ENCODE measurements at regions of chr19 and their contacts with region 1.

Region 1: DNA sequence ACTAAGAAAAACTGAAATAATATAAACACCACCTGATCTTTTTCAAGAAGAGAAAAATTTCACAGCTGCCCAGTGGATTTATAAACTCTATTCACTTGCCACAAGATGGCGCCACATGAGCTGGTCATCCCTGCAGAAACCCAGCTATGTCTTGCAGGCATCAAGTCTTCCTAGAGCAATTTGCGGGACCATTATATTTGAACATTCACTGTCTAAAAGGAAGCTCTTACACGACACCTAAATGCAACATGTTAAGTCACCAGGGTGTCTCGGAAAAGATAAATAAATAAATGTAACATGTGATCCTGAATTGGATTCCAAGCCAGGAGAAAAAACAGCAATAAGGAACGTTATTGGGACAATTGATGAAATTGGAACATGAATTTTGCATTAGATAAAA is 20.3 kb upstream of the AKT2 start:
- DNase-seq: peak; percentile 78
- ATAC-seq: peak; percentile 64
- H3K4me3 ChIP-seq: no peak overlapping the region
- H3K27ac ChIP-seq: no peak overlapping the region
- H3K4me1 ChIP-seq: no peaks in the 10 kb centered on the region
- H3K27me3 ChIP-seq: no peaks in the 10 kb centered on the region
- CTCF ChIP-seq: peak; percentile 76
- EP300 ChIP-seq: no peak
- POLR2A ChIP-seq: no peak
- RAD21 ChIP-seq: peak; percentile 67; the same call in 1 of the 2 replicates

Region 2: GRCh38 chr19:40392872-40393845 is 87.8 kb after region 1 on chr19:
- CTCF ChIA-PET with region 1: no interaction called
- POLR2A ChIA-PET with region 1: no interaction called
- in situ Hi-C with region 1: no loop called
- intact Hi-C with region 1: loop called (anchors 5 kb)
- DNase-seq: peak; percentile 31
- ATAC-seq: peak; percentile 86
- H3K4me3 ChIP-seq: no peak overlapping the region
- H3K27ac ChIP-seq: no peak overlapping the region
- H3K4me1 ChIP-seq: no peaks in the 10 kb centered on the region
- H3K27me3 ChIP-seq: peaks cover 10 to 35% of the 10 kb centered on the region in 2 experiments; a peak in 4 of 5 replicates
- CTCF ChIP-seq: peak; percentile 75
- EP300 ChIP-seq: no peak
- POLR2A ChIP-seq: no peak
- RAD21 ChIP-seq: 0 out of 2 replicates have a peak, but pooled peaks have one; percentile 44

Region 3: DNA sequence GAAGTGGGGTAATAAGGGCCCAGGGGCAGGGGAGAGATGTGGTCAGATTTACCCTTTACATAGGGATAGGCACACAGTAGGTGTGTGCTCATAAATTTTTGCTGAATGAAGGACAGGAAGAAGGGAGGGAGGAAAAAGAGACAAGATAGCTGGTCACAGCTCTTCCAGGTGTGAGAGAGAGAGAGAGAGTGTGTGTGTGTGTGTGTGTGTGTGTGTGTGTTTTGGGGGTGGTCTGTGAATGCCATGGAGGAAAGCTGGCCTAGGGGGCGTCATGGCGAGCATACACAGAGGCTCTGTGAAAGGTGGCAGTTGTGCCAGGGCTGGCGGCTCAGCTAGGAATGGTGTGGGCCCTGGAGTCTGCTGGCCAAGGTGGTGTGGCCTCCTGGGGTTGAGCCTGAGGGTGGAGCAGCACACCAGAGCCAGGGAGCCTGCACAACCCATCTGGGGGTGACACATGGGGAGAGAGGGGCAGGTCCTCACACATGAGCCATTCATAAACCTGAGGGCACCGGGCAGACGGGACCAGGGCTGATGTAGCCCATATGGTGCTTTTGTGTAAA is 113.7 kb after region 1 on chr19:
- CTCF ChIA-PET with region 1: no interaction called
- POLR2A ChIA-PET with region 1: no interaction called
- in situ Hi-C with region 1: no loop called
- intact Hi-C with region 1: no loop called
- DNase-seq: no peak
- ATAC-seq: no peak
- H3K4me3 ChIP-seq: no peak overlapping the region
- H3K27ac ChIP-seq: no peak overlapping the region
- H3K4me1 ChIP-seq: peaks cover 57% of the 10 kb centered on the region
- H3K27me3 ChIP-seq: no peaks in the 10 kb centered on the region
- CTCF ChIP-seq: no peak
- EP300 ChIP-seq: no peak
- POLR2A ChIP-seq: no peak
- RAD21 ChIP-seq: no peak